ENCODE measurements at regions of chr11 and their contacts with region 1.

Region 1: DNA sequence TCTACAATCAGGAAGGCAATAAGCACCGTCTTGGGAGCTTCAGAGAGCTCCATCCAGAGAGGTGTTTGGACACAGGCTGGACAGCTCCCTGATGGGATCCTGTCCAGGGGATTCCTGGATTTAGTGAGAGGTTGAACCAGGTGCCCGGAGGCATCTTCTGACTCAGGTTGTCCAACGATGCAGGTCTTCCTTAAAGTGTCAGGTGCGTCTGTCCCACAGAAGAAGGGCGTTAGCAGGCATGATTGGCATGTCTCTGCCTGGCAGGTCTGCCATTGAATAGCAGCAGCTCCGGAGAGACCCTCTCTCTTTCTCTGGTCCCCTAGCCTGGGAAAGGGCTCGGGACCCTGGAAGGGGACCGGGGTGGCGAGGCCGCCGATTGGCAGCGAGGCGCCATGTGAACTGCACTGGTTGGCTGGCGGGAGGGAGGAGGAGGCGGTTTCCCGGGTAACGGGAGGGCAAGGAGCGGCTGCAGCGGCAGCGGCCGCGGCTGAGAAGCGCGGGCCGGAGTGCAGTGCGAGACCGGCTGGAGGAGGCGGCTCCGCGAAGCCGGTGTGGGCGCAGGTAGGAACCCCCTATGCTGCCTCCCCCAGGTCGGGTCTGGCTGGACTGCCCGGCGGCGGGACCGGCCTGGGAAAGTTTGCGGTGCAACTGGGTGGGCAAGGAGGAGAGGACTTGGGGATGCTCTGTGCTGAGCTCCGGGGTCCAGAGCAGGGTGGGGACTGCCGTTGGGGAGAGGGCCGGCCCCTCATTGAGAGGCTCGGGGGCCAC is 104.2 kb upstream of the E2F8 start:
- DNase-seq: peak; percentile 43
- H3K4me3 ChIP-seq: peak overlapping the region in 2 of 3 experiments; percentile 32 to 58
- H3K27ac ChIP-seq: no peak overlapping the region
- H3K4me1 ChIP-seq: peaks cover 12% of the 10 kb centered on the region
- H3K27me3 ChIP-seq: peaks cover 23 to 36% of the 10 kb centered on the region in 2 experiments
- CTCF ChIP-seq: no peak
- POLR2A ChIP-seq: no peak

Region 2: DNA sequence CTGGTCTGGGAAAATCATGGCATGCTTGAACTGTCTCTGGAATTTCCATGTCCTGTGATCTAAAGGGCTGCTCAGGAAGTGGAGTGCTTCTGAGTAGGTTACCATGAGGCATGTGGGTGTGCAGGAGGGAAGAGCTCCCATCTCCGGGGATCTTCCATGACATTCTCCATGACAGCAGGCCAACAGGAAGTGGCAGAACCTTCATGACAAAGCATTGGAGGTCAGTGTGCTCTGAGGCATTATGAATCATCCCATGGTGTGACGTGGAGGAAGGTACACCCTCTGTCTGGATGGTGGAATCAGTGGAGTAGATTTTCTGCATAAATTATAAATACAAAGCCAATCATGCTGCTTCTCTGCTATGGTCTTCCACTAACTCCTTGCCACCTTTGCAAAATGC is 35.4 kb after region 1 on chr11:
- CTCF ChIA-PET with region 1: no interaction called
- POLR2A ChIA-PET with region 1: no interaction called
- dilution Hi-C with region 1: no loop called
- intact Hi-C with region 1: no loop called
- DNase-seq: peak; percentile 79
- H3K4me3 ChIP-seq: no peak overlapping the region
- H3K27ac ChIP-seq: peak overlapping the region; percentile 62
- H3K4me1 ChIP-seq: peaks cover 13% of the 10 kb centered on the region
- H3K27me3 ChIP-seq: no peaks in the 10 kb centered on the region
- CTCF ChIP-seq: no peak
- POLR2A ChIP-seq: no peak

Region 3: DNA sequence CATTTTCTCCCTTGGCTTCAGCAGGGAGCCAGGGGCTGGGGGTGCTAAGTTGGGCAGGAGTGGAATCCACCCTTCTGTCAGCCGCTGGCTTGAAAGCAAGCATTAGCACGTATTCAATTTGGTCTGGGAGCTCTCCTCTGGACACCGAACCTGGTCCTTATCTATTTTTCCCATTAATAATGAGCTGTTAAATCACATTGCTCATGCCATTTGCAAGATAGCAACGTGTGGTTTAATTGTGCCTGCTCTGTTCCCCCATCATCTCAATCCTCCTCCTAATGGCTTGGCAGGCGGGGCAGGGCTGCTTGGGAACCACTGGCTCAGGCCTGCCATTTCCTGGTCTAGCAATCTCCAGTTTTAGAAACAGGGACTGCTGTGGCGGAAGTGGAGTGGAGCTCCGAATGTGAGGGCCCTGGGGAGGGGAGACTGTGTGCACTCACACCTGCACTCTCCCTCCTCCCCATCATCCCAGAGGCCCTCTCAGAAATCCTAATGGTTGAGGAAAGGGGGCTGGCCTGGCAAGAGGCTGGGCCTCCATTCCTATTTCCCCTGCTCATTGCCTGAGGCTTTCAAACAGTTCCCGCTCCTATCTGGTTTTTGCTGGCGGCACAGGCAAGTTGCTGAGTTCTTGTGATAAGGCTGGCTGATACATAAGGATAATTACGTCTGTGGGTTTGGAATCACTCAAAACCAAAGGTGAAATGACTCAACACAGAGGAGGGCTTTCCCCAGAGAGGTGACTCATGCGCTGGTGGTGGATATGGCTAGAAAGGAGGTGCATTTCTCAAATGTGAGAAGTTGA is 97.0 kb after region 1 on chr11:
- CTCF ChIA-PET with region 1: no interaction called
- POLR2A ChIA-PET with region 1: no interaction called
- dilution Hi-C with region 1: no loop called
- intact Hi-C with region 1: loop called (anchors 5 kb)
- DNase-seq: peak; percentile 94
- H3K4me3 ChIP-seq: no peak overlapping the region
- H3K27ac ChIP-seq: peak overlapping the region; percentile 61
- H3K4me1 ChIP-seq: peaks cover 35% of the 10 kb centered on the region
- H3K27me3 ChIP-seq: no peaks in the 10 kb centered on the region
- CTCF ChIP-seq: no peak
- POLR2A ChIP-seq: no peak

Region 4: GRCh38 chr11:19777377-19778102 is 432.6 kb after region 1 on chr11:
- CTCF ChIA-PET with region 1: no interaction called
- POLR2A ChIA-PET with region 1: no interaction called
- dilution Hi-C with region 1: no loop called
- intact Hi-C with region 1: no loop called
- DNase-seq: peak; percentile 82
- H3K4me3 ChIP-seq: peak overlapping the region; percentile 18 to 60 (median 57)
- H3K27ac ChIP-seq: peak overlapping the region; percentile 38
- H3K4me1 ChIP-seq: peaks cover 14% of the 10 kb centered on the region
- H3K27me3 ChIP-seq: no peaks in the 10 kb centered on the region
- CTCF ChIP-seq: no peak
- POLR2A ChIP-seq: no peak

Measured in endothelial cell of umbilical vein (primary cell).